Naive thymus-derived CD4-positive, alpha-beta T cell (primary cell): ENCODE measurements at regions of chr2 and their contacts with region 1.

Region 1: DNA sequence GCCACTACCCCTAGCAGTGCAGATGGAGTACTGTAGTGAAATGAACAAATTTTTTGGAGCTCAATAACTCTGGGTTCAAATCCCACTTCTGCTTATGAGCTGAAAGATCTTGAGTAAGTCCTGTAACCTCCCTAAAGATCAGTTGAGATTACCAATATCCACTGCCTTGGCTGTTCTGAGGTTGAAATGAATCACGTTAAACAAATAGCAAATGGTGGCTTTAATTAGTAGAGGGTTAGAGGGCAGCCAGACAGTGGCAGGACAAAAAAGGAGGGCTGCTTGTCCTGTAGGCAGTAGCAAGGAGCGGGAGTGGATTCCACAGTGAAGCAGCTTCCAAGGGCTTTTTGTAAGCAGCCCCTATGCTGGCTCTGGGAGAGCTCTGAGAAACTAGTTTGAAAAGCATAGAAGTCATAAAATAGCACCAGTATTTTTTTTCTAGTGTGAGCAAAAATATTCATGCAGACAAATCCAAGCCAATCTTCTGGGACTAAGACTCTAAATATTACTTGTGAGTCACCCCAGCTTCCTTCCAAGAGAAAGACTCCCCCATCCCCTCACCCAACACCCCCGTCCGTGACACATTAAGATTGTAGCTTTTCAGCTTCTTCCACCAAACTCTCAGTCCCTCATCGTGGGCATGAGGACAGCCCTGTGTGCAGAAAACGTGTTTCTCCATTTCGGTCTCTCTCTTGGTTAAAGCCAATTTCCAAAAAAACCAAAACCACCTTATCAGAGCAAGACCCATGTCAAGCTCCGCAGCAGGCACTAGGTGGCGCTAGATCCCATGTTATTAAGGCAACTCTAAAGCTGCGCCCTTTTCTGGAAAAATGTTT is 123.5 kb upstream of the LGALSL start:
- DNase-seq: peak; percentile 61 to 80 (median 73)
- ATAC-seq: peak; percentile 54
- H3K4me3 ChIP-seq: no peak overlapping the region
- H3K4me3 Mint-ChIP-seq: peak overlapping the region in 9 of 10 donors; percentile 53 to 86 (median 68)
- H3K27ac ChIP-seq: no peak overlapping the region
- H3K27ac Mint-ChIP-seq: peak overlapping the region in 8 of 9 donors; percentile 9 to 94 (median 84)
- H3K4me1 ChIP-seq: peaks cover 27 to 29% of the 10 kb centered on the region in 2 donors
- H3K4me1 Mint-ChIP-seq: peaks cover 17 to 52% (median 36%) of the 10 kb centered on the region in 7 donors
- H3K27me3 ChIP-seq: no peaks in the 10 kb centered on the region
- H3K27me3 Mint-ChIP-seq: peaks cover 0 to 3% (median 0%) of the 10 kb centered on the region in 5 donors

Region 2: DNA sequence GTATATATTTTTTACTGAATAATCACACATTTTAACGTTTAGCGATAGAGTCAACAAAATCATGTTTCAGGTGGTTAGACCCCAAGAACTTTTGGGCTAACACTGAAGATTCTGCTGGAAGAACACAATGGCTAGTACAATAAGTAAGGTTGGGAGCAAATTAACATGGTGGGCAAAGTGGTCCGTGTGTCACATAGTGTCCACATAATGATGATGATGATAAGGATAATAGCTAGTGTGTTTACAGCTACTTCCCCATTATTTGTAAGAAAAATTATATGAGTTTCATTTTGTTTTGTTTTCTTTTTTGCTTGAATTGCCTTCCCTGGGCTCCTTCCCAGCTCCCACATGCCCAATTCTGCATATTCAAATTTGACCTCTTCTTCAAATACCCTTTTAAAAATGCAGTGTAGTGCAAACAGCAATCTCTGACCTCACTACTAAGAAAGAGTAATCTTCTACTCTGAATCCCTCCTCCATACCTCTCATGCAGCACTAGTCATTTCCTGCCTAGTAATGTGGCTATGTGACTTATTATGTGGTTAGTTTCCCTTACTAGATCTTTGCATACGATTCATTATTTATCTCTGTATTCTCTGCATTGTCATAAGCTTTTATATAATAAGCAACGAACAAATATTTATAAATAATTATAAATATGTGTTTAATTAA is 294.3 kb before region 1 on chr2:
- CTCF ChIA-PET with region 1: interaction called, 11 read pairs
- POLR2A ChIA-PET with region 1: interaction called, 4 read pairs
- intact Hi-C with region 1: no loop called
- DNase-seq: peak in 7 of 9 donors; percentile 60 to 75 (median 64)
- ATAC-seq: peak; percentile 98
- H3K4me3 ChIP-seq: peak overlapping the region; percentile 25
- H3K4me3 Mint-ChIP-seq: peak overlapping the region; percentile 30 to 86 (median 60)
- H3K27ac ChIP-seq: peak overlapping the region; percentile 54
- H3K27ac Mint-ChIP-seq: peak overlapping the region; percentile 49 to 93 (median 83)
- H3K4me1 ChIP-seq: peaks cover 20 to 42% of the 10 kb centered on the region in 2 donors
- H3K4me1 Mint-ChIP-seq: peaks cover 29 to 70% (median 54%) of the 10 kb centered on the region in 7 donors
- H3K27me3 ChIP-seq: no peaks in the 10 kb centered on the region
- H3K27me3 Mint-ChIP-seq: no peaks in the 10 kb centered on the region

Region 3: GRCh38 chr2:64214281-64215115 is 116.0 kb before region 1 on chr2:
- CTCF ChIA-PET with region 1: interaction called, 10 read pairs
- POLR2A ChIA-PET with region 1: interaction called, 6 read pairs
- intact Hi-C with region 1: loop called in 1 of 2 experiments (anchors 1 kb)
- DNase-seq: peak in 7 of 9 donors; percentile 60 to 82 (median 73)
- ATAC-seq: peak; percentile 73
- H3K4me3 ChIP-seq: peak overlapping the region; percentile 11
- H3K4me3 Mint-ChIP-seq: peak overlapping the region; percentile 35 to 89 (median 71)
- H3K27ac ChIP-seq: peak overlapping the region; percentile 68
- H3K27ac Mint-ChIP-seq: peak overlapping the region; percentile 78 to 96 (median 93)
- H3K4me1 ChIP-seq: peaks cover 20 to 37% of the 10 kb centered on the region in 2 donors
- H3K4me1 Mint-ChIP-seq: peaks cover 24 to 69% (median 55%) of the 10 kb centered on the region in 7 donors
- H3K27me3 ChIP-seq: no peaks in the 10 kb centered on the region
- H3K27me3 Mint-ChIP-seq: no peaks in the 10 kb centered on the region

Region 4: GRCh38 chr2:64318476-64318748 is 12.1 kb before region 1 on chr2:
- CTCF ChIA-PET with region 1: interaction called, 14 read pairs
- POLR2A ChIA-PET with region 1: interaction called, 8 read pairs
- intact Hi-C with region 1: loop called in 1 of 2 experiments (anchors 1 kb)
- DNase-seq: no peak
- ATAC-seq: no peak
- H3K4me3 ChIP-seq: no peak overlapping the region
- H3K4me3 Mint-ChIP-seq: no peak overlapping the region
- H3K27ac ChIP-seq: no peak overlapping the region
- H3K27ac Mint-ChIP-seq: peak overlapping the region in 1 of 9 donors; percentile 72
- H3K4me1 ChIP-seq: no peaks in the 10 kb centered on the region
- H3K4me1 Mint-ChIP-seq: peaks cover 0 to 21% (median 5%) of the 10 kb centered on the region in 7 donors
- H3K27me3 ChIP-seq: no peaks in the 10 kb centered on the region
- H3K27me3 Mint-ChIP-seq: peaks cover 0 to 57% (median 0%) of the 10 kb centered on the region in 5 donors

Region 5: GRCh38 chr2:64750817-64751285 is 420.4 kb after region 1 on chr2:
- CTCF ChIA-PET with region 1: no interaction called
- POLR2A ChIA-PET with region 1: interaction called, 3 read pairs
- intact Hi-C with region 1: loop called in 1 of 2 experiments (anchors 5 kb)
- DNase-seq: peak in 8 of 9 donors; percentile 87 to 97 (median 96)
- ATAC-seq: peak; percentile 90
- H3K4me3 ChIP-seq: peak overlapping the region; percentile 98
- H3K4me3 Mint-ChIP-seq: peak overlapping the region; percentile 91 to 100 (median 99)
- H3K27ac ChIP-seq: peak overlapping the region; percentile 91
- H3K27ac Mint-ChIP-seq: peak overlapping the region; percentile 91 to 99 (median 96)
- H3K4me1 ChIP-seq: peaks cover 3 to 13% of the 10 kb centered on the region in 2 donors
- H3K4me1 Mint-ChIP-seq: peaks cover 5 to 34% (median 29%) of the 10 kb centered on the region in 7 donors
- H3K27me3 ChIP-seq: no peaks in the 10 kb centered on the region
- H3K27me3 Mint-ChIP-seq: no peaks in the 10 kb centered on the region

Region 6: DNA sequence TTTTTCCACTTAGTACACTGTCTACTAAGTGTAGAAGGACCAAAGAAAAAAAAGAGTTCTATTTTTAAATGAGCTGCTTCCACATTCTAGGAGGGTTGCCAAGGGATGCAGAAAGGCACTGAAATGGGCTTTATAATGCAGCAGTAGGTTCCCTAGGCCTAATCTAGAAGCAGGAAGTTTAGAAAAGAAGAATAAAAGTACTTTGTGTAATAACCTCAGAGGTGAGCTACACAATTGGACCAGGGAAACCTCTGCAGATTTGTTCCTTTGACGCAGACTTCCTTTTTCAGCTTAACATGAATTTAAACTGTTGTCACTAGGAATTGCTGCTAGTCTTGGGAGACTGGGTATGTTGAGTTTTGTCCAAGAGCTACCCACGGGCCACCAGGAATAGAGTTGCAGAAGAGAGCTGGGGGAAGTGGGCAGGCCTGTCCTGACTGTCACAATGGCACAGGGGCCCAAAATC is 834.0 kb after region 1 on chr2:
- CTCF ChIA-PET with region 1: no interaction called
- POLR2A ChIA-PET with region 1: no interaction called
- intact Hi-C with region 1: loop called in 1 of 2 experiments (anchors 10 kb)
- DNase-seq: no peak
- ATAC-seq: no peak
- H3K4me3 ChIP-seq: no peak overlapping the region
- H3K4me3 Mint-ChIP-seq: peak overlapping the region in 1 of 10 donors; percentile 6
- H3K27ac ChIP-seq: no peak overlapping the region
- H3K27ac Mint-ChIP-seq: peak overlapping the region in 7 of 9 donors; percentile 30 to 71 (median 56)
- H3K4me1 ChIP-seq: peaks cover 0 to 5% of the 10 kb centered on the region in 2 donors
- H3K4me1 Mint-ChIP-seq: peaks cover 17 to 32% (median 24%) of the 10 kb centered on the region in 7 donors
- H3K27me3 ChIP-seq: no peaks in the 10 kb centered on the region
- H3K27me3 Mint-ChIP-seq: peaks cover 0 to 2% (median 0%) of the 10 kb centered on the region in 5 donors